Naive thymus-derived CD4-positive, alpha-beta T cell (primary cell): ENCODE measurements at regions of chr9 and their contacts with region 1.

Region 1: DNA sequence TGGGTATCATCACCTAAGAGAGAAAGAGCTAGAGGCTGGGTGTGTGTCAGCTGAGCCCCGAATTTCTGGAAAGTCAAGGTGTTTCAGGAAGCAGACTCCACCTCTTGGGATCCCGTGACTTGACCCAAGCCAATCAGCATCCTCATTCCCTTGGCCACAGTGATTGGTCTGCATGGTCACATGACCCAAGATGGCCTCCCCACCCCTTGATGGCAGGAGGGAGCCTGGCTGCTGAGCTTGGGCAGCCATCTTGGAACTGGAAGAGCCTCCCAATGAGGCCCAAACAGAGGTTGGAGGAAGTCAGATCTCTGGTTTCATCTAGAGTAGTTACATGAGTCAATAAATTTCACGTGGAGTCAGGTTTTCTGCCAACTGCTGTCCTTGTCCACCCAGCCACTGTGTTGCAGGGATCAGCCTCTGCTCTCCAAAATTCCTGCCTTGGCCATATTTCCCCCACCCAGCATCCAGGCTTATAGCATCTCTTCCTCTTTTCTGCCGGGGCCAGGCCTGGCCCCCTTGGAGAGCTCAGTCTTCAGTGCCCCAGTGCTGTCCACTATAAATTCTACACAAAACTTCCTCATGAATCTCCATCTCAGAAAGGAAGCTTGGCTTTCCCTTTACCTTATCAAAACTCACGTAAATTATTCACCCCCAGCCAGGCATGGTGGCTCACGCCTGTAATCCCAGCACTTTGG is 17.2 kb upstream of the SUSD3 start:
- DNase-seq: no peak
- ATAC-seq: no peak
- H3K4me3 ChIP-seq: no peak overlapping the region
- H3K4me3 Mint-ChIP-seq: peak overlapping the region in 5 of 10 donors; percentile 8 to 60 (median 48)
- H3K27ac ChIP-seq: peak overlapping the region; percentile 55
- H3K27ac Mint-ChIP-seq: peak overlapping the region; percentile 55 to 95 (median 92)
- H3K4me1 ChIP-seq: peaks cover 0 to 29% of the 10 kb centered on the region in 2 donors
- H3K4me1 Mint-ChIP-seq: peaks cover 32 to 85% (median 67%) of the 10 kb centered on the region in 7 donors
- H3K27me3 ChIP-seq: no peaks in the 10 kb centered on the region
- H3K27me3 Mint-ChIP-seq: peaks cover 0 to 2% (median 0%) of the 10 kb centered on the region in 5 donors

Region 2: GRCh38 chr9:93013856-93014582 is 27.2 kb before region 1 on chr9:
- CTCF ChIA-PET with region 1: interaction called, 3 read pairs
- POLR2A ChIA-PET with region 1: interaction called, 11 read pairs
- intact Hi-C with region 1: no loop called
- DNase-seq: no peak
- ATAC-seq: no peak
- H3K4me3 ChIP-seq: no peak overlapping the region
- H3K4me3 Mint-ChIP-seq: peak overlapping the region in 2 of 10 donors; percentile 14 to 20
- H3K27ac ChIP-seq: peak overlapping the region; percentile 0
- H3K27ac Mint-ChIP-seq: peak overlapping the region in 8 of 9 donors; percentile 27 to 91 (median 84)
- H3K4me1 ChIP-seq: peaks cover 0 to 8% of the 10 kb centered on the region in 2 donors
- H3K4me1 Mint-ChIP-seq: peaks cover 14 to 46% (median 25%) of the 10 kb centered on the region in 7 donors
- H3K27me3 ChIP-seq: no peaks in the 10 kb centered on the region
- H3K27me3 Mint-ChIP-seq: no peaks in the 10 kb centered on the region

Region 3: GRCh38 chr9:93051680-93052089 is 10.4 kb after region 1 on chr9:
- CTCF ChIA-PET with region 1: interaction called, 11 read pairs
- POLR2A ChIA-PET with region 1: interaction called, 25 read pairs
- intact Hi-C with region 1: no loop called
- DNase-seq: no peak
- ATAC-seq: no peak
- H3K4me3 ChIP-seq: no peak overlapping the region
- H3K4me3 Mint-ChIP-seq: no peak overlapping the region
- H3K27ac ChIP-seq: no peak overlapping the region
- H3K27ac Mint-ChIP-seq: peak overlapping the region in 6 of 9 donors; percentile 21 to 72 (median 63)
- H3K4me1 ChIP-seq: peaks cover 0 to 16% of the 10 kb centered on the region in 2 donors
- H3K4me1 Mint-ChIP-seq: peaks cover 23 to 66% (median 54%) of the 10 kb centered on the region in 7 donors
- H3K27me3 ChIP-seq: no peaks in the 10 kb centered on the region
- H3K27me3 Mint-ChIP-seq: peaks cover 0 to 2% (median 0%) of the 10 kb centered on the region in 5 donors

Region 4: GRCh38 chr9:93058355-93059096 is 17.3 kb after region 1 on chr9 and contains the start of gene SUSD3:
- CTCF ChIA-PET with region 1: interaction called, 4 read pairs
- POLR2A ChIA-PET with region 1: interaction called, 365 read pairs
- intact Hi-C with region 1: no loop called
- DNase-seq: peak; percentile 47 to 82 (median 65)
- ATAC-seq: peak; percentile 81
- H3K4me3 ChIP-seq: peak within 1 kb of the TSS; percentile 90
- H3K4me3 Mint-ChIP-seq: peak within 1 kb of the TSS; percentile 93 to 97 (median 94)
- H3K27ac ChIP-seq: peak within 1 kb of the TSS; percentile 88
- H3K27ac Mint-ChIP-seq: peak within 1 kb of the TSS; percentile 97 to 100 (median 99)
- H3K4me1 ChIP-seq: peaks cover 52 to 56% of the 10 kb centered on the region in 2 donors
- H3K4me1 Mint-ChIP-seq: peaks cover 31 to 78% (median 65%) of the 10 kb centered on the region in 7 donors
- H3K27me3 ChIP-seq: no peaks in the 10 kb centered on the region
- H3K27me3 Mint-ChIP-seq: no peaks in the 10 kb centered on the region
- total RNA-seq, gene SUSD3: 62.8 to 83.5 (median 68.7) TPM

Region 5: DNA sequence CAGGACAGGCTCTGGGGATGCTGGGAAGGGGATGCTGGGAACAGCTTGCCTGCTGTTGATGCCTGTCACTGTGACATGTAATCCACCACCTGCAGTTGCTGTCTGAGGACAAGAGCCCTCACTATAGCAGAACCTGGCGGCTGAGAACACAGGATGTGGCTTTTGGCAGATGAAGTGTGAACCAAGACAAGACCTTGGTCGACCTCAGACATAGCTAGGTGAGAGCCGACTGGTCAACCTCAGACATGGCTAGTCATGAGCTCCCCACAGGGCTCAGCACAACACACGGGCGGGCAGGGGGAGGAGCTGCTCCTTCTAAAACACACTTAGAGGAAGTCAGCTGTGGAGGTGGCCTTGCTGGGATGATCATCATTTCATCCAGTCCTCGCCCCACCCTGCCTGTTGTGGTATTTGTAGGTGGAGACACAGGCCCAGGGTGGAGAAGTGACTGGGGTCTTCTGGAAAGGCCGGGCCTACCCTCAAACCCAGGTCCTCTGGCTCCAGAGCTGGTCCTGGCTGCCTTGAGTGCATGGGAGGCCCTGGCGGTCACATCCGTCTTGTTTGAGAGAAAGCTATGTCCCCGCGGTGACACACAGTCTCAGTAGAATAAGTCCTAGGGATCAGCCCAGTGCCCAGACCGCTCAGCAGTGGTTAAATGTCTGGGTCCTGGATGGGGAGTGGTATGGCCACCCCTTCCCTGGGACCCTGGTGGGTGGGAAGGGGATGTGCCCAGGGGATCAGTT is 23.3 kb after region 1 on chr9:
- CTCF ChIA-PET with region 1: interaction called, 5 read pairs
- POLR2A ChIA-PET with region 1: interaction called, 365 read pairs
- intact Hi-C with region 1: loop called in 1 of 2 experiments (anchors 1 kb)
- DNase-seq: peak; percentile 54 to 95 (median 90)
- ATAC-seq: peak; percentile 96
- H3K4me3 ChIP-seq: peak overlapping the region; percentile 90
- H3K4me3 Mint-ChIP-seq: peak overlapping the region; percentile 87 to 97 (median 92)
- H3K27ac ChIP-seq: peak overlapping the region; percentile 88
- H3K27ac Mint-ChIP-seq: peak overlapping the region; percentile 97 to 100 (median 99)
- H3K4me1 ChIP-seq: peaks cover 63 to 87% of the 10 kb centered on the region in 2 donors
- H3K4me1 Mint-ChIP-seq: peaks cover 71 to 95% (median 86%) of the 10 kb centered on the region in 7 donors
- H3K27me3 ChIP-seq: no peaks in the 10 kb centered on the region
- H3K27me3 Mint-ChIP-seq: no peaks in the 10 kb centered on the region

Region 6: GRCh38 chr9:93173365-93174051 is 132.3 kb after region 1 on chr9:
- CTCF ChIA-PET with region 1: no interaction called
- POLR2A ChIA-PET with region 1: no interaction called
- intact Hi-C with region 1: no loop called
- DNase-seq: peak in 3 of 9 donors; percentile 11 to 22 (median 13)
- ATAC-seq: no peak
- H3K4me3 ChIP-seq: no peak overlapping the region
- H3K4me3 Mint-ChIP-seq: peak overlapping the region in 3 of 10 donors; percentile 10 to 32 (median 18)
- H3K27ac ChIP-seq: no peak overlapping the region
- H3K27ac Mint-ChIP-seq: peak overlapping the region in 5 of 9 donors; percentile 12 to 81 (median 24)
- H3K4me1 ChIP-seq: no peaks in the 10 kb centered on the region
- H3K4me1 Mint-ChIP-seq: peaks cover 0 to 5% (median 1%) of the 10 kb centered on the region in 7 donors
- H3K27me3 ChIP-seq: no peaks in the 10 kb centered on the region
- H3K27me3 Mint-ChIP-seq: peaks cover 0 to 10% (median under 1%) of the 10 kb centered on the region in 5 donors